ENCODE measurements at regions of chr7 and their contacts with region 1.

Region 1: GRCh38 chr7:129689995-129690581 is 78.6 kb downstream of the NRF1 start:
- DNase-seq: peak; percentile 24
- ATAC-seq: peak; percentile 75
- H3K4me3 ChIP-seq: no peak overlapping the region
- H3K27ac ChIP-seq: peak overlapping the region; percentile 72
- H3K4me1 ChIP-seq: peaks cover 22% of the 10 kb centered on the region
- H3K27me3 ChIP-seq: no peaks in the 10 kb centered on the region
- CTCF ChIP-seq: no peak

Region 2: DNA sequence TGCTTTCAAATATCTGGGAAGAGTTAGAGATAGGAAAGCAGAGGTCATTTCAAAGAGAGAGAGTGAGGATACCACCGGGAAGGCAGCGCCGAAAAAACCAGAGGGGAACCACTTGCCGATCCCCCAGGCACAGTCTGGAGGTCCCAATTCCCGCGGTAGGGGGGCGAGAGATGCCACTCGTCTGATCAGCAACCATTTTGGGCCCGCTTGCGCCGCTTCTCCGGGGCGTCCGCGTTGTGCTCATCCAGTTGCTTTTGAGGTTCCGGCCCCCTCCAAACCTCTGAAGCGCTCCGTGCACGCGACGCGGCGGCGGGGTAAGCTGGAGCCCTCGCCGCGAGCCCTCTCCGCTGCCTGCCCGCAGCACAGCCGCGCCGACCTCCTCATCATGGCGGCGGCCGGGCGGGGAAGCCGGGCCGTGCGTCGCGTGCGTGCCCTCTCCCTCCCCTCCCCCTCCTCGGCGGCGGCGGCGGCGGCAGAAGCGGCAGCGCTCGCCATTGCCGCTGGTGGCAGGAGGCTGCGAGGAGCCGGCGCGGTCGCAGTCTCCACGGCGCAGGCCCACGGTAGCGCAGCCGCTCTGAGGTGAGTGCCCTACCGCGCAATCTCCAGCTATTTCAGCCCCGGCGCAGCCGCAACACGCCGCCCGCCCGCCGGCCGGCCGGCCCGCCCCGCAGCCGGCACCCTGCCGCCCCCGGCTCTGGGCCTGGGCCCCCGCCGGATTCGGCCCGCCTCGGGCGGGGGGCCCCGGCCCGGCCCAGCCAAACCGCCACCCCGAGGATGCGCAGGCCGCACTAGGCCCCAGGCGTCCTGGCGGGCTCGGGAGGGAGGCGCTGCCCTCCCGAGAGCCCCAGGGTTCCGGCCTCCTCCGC is 78.6 kb before region 1 on chr7 and contains the start of gene NRF1:
- CTCF ChIA-PET with region 1: no interaction called
- POLR2A ChIA-PET with region 1: interaction called, 10 read pairs
- intact Hi-C with region 1: no loop called
- DNase-seq: peak; percentile 84
- ATAC-seq: peak; percentile 95
- H3K4me3 ChIP-seq: peak within 1 kb of the TSS; percentile 77
- H3K27ac ChIP-seq: peak within 1 kb of the TSS; percentile 71
- H3K4me1 ChIP-seq: peaks cover 24% of the 10 kb centered on the region
- H3K27me3 ChIP-seq: no peaks in the 10 kb centered on the region
- CTCF ChIP-seq: no peak
- total RNA-seq, gene NRF1: 13.6 and 21.1 TPM in 2 replicates

Region 3: GRCh38 chr7:129664029-129665012 is 25.8 kb before region 1 on chr7:
- CTCF ChIA-PET with region 1: no interaction called
- POLR2A ChIA-PET with region 1: interaction called, 6 read pairs
- intact Hi-C with region 1: loop called (anchors 2 kb)
- DNase-seq: peak; percentile 68
- ATAC-seq: peak; percentile 76
- H3K4me3 ChIP-seq: no peak overlapping the region
- H3K27ac ChIP-seq: peak overlapping the region; percentile 68
- H3K4me1 ChIP-seq: peaks cover 30% of the 10 kb centered on the region
- H3K27me3 ChIP-seq: no peaks in the 10 kb centered on the region
- CTCF ChIP-seq: peak; percentile 77

Region 4: DNA sequence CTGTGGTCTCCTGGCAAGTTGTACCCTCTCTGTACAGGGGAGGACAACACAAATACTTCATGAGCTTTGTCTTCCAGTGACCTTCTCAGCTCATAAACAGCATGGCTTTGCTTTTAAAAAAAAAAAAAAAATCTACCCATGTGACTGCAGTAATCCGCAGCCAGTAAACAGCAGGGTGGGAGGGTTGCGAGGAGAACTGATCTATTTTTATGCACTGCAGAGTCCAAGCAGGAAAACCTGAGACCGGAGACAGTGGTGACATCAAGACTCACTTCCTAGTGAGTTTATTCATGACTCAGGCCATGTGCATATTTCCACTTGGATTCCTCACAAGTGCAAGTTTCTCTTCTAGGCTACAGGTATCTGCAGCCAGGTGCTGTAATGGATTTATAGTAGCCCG is 49.3 kb after region 1 on chr7:
- CTCF ChIA-PET with region 1: no interaction called
- POLR2A ChIA-PET with region 1: no interaction called
- intact Hi-C with region 1: loop called (anchors 2 kb)
- DNase-seq: peak; percentile 84
- ATAC-seq: peak; percentile 91
- H3K4me3 ChIP-seq: no peak overlapping the region
- H3K27ac ChIP-seq: peak overlapping the region; percentile 70
- H3K4me1 ChIP-seq: peaks cover 27% of the 10 kb centered on the region
- H3K27me3 ChIP-seq: no peaks in the 10 kb centered on the region
- CTCF ChIP-seq: no peak

Measured in PC-3 (cell line).